ENCODE measurements at regions of chr10 and their contacts with region 1.

Region 1: GRCh38 chr10:77173615-77174461 is 463.8 kb downstream of the KCNMA1 start:
- DNase-seq: peak in 9 of 10 donors; percentile 45 to 94 (median 75)

Region 2: DNA sequence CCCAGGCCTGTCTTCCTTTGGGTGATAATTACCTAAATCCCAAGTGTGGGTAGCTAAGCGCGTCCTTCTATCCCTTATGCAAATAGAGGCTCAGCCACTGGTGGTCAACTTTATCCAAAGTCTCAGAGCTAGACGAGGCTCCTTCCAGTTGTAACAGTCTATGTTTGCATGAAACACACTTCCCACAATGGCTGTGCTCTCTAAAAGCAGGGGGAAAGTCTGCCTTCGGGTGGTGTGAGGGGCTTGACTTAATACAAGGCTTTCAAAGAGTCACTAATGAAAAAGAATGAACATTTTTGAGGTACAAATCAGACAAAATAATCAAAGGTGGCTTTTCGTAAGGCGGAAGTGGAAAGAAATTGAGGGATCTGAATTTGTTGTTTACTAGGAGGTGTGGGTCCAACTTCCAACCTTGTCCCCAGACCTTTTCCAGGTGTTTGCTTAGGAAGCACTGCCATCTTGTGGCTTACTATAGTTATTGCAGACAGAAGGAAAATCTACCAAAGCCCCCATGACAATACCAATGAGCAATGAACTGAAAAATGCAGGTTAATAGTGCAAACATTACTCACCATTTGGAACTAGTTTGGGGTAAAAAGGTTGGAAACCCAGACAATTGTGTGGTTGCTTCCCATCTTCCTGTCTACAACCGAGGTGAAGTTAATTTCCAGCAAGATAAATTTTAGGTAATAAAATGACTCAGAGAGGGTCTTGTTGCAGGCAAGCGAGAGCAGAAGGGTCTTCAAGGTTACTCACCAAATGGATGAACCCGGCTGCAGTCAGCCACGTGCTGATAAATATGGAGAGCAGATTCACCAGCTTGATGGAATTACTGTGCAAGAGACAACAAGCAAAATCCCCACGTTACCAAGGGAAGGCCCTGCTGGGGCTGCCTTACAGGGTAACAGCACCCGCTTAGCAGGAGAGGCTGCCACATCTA is 62.0 kb before region 1 on chr10:
- intact Hi-C with region 1: no loop called
- DNase-seq: no peak

Region 3: GRCh38 chr10:77391605-77392235 is 217.9 kb after region 1 on chr10:
- intact Hi-C with region 1: loop called (anchors 5 kb)
- DNase-seq: peak in 9 of 10 donors; percentile 59 to 95 (median 86)

Region 4: DNA sequence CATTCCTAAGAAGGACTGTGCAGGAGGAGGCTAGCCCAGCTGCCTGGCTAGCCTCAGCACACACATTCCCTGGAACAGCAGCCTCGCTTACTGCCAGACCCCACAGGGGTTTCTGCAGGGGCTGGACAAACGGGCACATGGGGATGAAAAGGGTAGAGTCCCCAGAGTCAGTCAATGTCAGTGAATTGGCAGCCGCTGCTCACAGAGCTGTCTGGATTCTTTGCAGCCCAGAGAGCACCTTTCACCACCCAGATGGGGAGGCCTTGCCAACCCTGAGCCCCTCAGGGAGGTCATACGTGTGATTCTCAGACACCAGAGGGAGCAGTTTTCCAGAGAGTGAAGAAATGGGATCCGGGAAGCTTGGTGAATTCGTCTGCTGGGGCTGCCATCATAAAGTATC is 320.5 kb after region 1 on chr10:
- intact Hi-C with region 1: loop called (anchors 10 kb)
- DNase-seq: no peak

Region 5: DNA sequence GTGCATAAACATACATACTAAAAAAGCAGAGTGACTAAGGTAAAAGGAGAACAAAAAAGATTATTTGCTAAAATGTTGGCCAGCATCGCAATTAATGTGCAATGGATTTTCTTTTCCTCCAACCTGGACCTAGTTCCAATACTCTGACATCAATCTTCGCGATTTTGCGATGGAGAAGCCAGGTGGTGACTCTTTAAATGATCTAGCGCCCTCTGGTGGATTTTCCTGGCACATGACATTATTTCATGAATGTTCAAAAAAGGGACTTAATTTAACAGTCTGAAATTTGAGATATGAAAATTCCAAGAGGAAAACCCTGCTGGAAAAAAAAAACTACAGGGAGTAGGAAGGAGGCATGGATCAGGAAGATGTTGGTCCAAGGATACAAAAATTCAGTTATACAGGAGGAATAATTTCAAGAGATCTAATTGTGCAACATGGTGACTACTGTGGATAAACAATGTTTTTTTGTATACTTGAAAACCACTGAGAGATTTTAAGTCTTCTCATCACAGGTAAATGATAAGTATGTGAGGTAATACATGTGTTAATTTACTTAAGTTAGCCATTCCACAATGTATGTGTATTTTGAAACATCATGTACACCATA is 468.1 kb after region 1 on chr10:
- intact Hi-C with region 1: loop called (anchors 1 kb)
- DNase-seq: peak in 4 of 10 donors; percentile 51 to 63 (median 60)

Region 6: DNA sequence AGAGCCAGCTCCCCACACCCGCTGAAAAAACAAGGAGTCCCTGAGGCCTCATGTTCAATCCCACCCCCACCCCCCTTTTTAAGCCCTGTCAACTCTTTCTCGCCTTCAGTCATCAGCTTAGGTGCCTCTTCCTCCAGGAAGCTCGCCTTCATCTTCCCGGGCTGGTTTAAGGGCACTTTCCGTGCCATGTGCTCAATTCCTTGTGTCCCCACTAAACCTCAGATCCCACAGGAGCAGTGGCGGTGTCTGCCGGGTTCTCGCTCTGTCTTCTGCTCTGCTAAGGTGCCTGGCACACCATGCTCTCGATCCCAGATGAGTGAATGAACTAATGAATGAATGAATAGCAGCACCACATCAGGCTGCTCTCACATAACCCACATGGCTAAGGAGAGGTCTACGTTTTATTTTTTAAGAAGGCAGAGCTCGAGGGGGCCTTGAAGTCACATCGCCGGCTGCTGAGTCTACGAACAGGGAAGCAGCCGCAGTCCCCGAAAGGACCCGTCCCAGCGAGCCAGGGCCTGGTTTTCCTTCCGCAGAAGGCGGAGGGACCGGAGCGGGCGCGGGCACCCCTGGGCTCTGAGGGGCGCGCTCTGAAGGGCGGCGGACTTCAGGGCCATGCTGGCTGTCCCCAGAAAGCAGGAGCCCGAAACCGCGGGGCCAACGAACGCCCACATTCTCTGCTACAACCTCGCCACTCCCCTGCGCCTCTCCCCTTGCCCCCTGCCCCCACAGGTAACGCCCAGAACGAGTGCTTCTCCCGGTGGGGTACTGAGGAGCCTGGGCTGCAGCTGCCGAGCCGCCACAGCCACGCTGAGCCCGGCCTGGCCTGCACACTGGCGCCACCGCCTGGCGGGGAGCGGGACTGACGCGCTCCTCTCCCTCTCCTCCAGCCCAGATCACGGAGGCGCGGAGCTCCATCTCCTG is 537.2 kb after region 1 on chr10:
- intact Hi-C with region 1: loop called (anchors 2 kb)
- DNase-seq: peak; percentile 53 to 96 (median 80)